ENCODE measurements at regions of chr3 and their contacts with region 1.

Region 1: GRCh38 chr3:71725279-71725991 is at the start of gene EIF4E3:
- DNase-seq: peak; percentile 79
- ATAC-seq: peak; percentile 72
- total RNA-seq, gene EIF4E3: 49.2 TPM

Region 2: GRCh38 chr3:71673486-71673885 is 51.9 kb before region 1 on chr3:
- intact Hi-C with region 1: no loop called
- DNase-seq: no peak
- ATAC-seq: no peak

Region 3: DNA sequence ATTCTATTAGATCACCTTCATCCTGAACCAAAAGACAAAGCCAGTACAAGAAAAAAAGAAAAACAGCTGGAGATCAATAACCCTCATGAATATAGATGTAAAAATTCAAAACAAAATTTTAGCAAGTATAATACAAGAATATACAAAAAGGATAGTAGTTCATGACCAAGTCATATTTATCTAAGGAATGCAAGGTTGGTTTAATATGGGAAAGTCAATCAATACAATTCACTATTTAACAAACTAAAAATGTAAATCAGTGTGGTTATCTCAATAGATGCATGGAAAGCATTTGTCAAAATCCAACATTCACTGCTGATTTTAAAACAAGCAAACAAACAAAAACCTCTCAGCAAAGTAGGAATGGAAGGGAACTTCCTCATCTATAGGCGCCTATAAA is 17.2 kb after region 1 on chr3:
- intact Hi-C with region 1: loop called (anchors 1 kb)
- DNase-seq: no peak
- ATAC-seq: no peak

Region 4: GRCh38 chr3:71862371-71863140 is 137.1 kb after region 1 on chr3:
- intact Hi-C with region 1: loop called (anchors 10 kb)
- DNase-seq: no peak
- ATAC-seq: no peak

Measured in Right ventricle myocardium inferior (tissue), 1 donor.